ENCODE measurements at regions of chr20 and their contacts with region 1.

Region 1: DNA sequence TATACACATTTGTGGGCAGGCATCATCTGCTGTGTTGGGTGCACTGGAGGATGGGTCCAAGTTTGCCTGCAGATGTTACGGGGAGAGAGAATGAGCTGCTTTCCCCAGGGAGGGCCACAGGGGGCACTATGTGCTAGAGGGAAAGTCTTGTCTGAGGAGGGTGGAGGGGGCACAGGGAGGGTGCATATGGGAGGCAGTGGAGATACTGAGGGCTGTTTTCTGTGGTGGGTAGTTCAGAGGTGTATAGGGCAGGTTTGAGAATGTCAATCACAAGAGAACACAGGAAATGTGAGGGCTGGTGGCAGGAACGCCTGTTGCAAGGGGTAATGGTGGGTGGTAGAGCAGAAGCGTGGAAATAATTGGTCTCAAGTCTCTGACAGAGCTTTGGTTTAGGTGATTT is 7.7 kb upstream of the PTPRA start:
- DNase-seq: peak in 8 of 9 experiments; percentile 21 to 74 (median 54)
- ATAC-seq: peak; percentile 94
- H3K4me3 ChIP-seq: no peak overlapping the region
- H3K4me3 Mint-ChIP-seq: peak overlapping the region; percentile 32
- H3K27ac ChIP-seq: peak overlapping the region in 1 of 2 experiments; percentile 59
- H3K27ac Mint-ChIP-seq: peak overlapping the region; percentile 45
- H3K4me1 ChIP-seq: peaks cover 41% of the 10 kb centered on the region
- H3K4me1 Mint-ChIP-seq: peaks cover 36% of the 10 kb centered on the region
- H3K27me3 ChIP-seq: no peaks in the 10 kb centered on the region
- H3K27me3 Mint-ChIP-seq: no peaks in the 10 kb centered on the region
- CTCF ChIP-seq: peak; percentile 26

Region 2: GRCh38 chr20:2825761-2826160 is 39.9 kb before region 1 on chr20:
- CTCF ChIA-PET with region 1: no interaction called
- POLR2A ChIA-PET with region 1: no interaction called
- intact Hi-C with region 1: loop called in 1 of 2 experiments (anchors 5 kb)
- DNase-seq: peak in 2 of 9 experiments; percentile 38 to 57
- ATAC-seq: no peak
- H3K4me3 ChIP-seq: no peak overlapping the region
- H3K4me3 Mint-ChIP-seq: peak overlapping the region; percentile 58
- H3K27ac ChIP-seq: no peak overlapping the region
- H3K27ac Mint-ChIP-seq: no peak overlapping the region
- H3K4me1 ChIP-seq: peaks cover 30% of the 10 kb centered on the region
- H3K4me1 Mint-ChIP-seq: peaks cover 26% of the 10 kb centered on the region
- H3K27me3 ChIP-seq: peaks cover 0 to 3% of the 10 kb centered on the region in 2 experiments
- H3K27me3 Mint-ChIP-seq: peaks cover 4% of the 10 kb centered on the region
- CTCF ChIP-seq: no peak

Region 3: GRCh38 chr20:2984956-2985661 is 119.5 kb after region 1 on chr20:
- CTCF ChIA-PET with region 1: no interaction called
- POLR2A ChIA-PET with region 1: no interaction called
- intact Hi-C with region 1: loop called (anchors 1 to 5 kb)
- DNase-seq: no peak
- ATAC-seq: no peak
- H3K4me3 ChIP-seq: no peak overlapping the region
- H3K4me3 Mint-ChIP-seq: no peak overlapping the region
- H3K27ac ChIP-seq: peak overlapping the region in 1 of 2 experiments; percentile 80
- H3K27ac Mint-ChIP-seq: no peak overlapping the region
- H3K4me1 ChIP-seq: no peaks in the 10 kb centered on the region
- H3K4me1 Mint-ChIP-seq: peaks cover 4% of the 10 kb centered on the region
- H3K27me3 ChIP-seq: no peaks in the 10 kb centered on the region
- H3K27me3 Mint-ChIP-seq: no peaks in the 10 kb centered on the region
- CTCF ChIP-seq: no peak